Activated CD4-positive, alpha-beta T cell treated with anti-CD3 and anti-CD28 coated beads for 36 hours (primary cell): ENCODE measurements at regions of chr4 and their contacts with region 1.

Region 1: DNA sequence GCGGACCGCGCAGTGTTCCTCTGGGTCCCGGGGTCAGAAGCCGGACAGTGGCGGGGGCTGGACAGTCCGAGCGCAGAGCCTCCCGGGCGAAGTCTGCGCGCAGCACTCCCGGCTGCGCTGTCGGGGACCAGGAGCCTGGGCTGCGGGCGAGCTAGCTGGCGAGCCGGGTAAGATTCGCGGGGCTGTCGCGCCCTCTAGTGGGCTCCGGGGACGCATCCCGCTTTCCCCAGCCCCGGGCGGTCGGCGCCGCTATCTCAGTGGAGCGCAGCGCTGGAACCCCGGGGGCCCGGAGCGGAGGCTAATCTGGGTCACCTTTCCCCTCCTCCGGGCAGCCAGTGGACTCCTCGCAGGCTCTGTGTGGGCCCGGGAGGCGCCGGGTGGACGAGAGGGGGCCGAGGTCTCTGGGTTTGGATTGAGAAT is 4.2 kb downstream of the PDGFRA start:
- DNase-seq: peak; percentile 91
- ATAC-seq: peak; percentile 93
- H3K4me3 Mint-ChIP-seq: peak overlapping the region; percentile 60
- H3K27ac Mint-ChIP-seq: no peak overlapping the region
- H3K4me1 Mint-ChIP-seq: peaks cover 20% of the 10 kb centered on the region
- H3K27me3 Mint-ChIP-seq: peaks cover 48% of the 10 kb centered on the region

Region 2: DNA sequence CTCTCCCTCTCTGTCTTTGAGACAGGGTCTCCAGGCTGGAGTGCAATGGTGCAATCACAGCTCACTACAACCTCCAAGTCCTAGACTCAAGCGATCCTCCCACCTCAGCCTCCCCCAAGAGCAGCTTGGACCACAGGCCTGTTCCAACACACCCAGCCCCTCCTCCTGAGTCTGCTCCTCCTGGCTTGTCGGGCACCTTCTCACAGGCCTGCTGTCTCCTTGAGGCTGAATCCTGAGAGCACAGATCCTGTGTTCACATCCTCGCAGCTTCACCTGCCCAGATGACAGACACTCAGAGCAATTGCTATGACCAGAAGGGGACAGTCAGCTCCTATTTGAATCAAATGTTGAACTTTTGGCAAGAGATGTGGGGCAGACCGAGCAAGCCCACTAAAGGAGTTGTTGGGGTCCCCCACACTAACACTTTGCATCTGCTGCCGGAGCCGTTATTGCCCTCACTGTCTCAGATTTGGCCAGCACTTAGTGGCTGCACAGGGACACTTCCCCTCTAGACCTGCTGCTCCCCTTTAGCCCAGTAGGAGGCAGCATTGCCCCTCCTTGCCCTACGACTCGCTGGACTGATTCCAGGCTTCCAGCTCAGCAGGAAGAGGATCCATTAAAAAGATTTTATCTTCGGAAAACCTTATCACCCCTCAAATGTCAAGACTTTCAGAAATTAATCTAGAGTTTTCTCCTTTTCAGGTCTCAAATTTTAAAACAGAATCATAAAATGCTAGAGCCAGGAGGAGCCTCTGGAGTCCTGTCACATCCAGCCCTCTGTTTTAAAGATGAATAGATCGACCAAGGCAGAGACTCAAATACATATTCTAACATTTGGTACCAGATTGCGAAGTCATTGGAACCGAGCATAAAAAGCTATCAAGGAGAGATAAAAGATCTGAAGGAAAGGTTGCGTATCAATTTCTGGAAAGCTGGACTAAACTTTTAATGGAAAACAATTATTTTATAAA is 1687.9 kb before region 1 on chr4:
- CTCF ChIA-PET with region 1: interaction called, 8 read pairs
- POLR2A ChIA-PET with region 1: no interaction called
- intact Hi-C with region 1: loop called (anchors 2 to 10 kb)
- DNase-seq: peak; percentile 76
- ATAC-seq: peak; percentile 61
- H3K4me3 Mint-ChIP-seq: no peak overlapping the region
- H3K27ac Mint-ChIP-seq: no peak overlapping the region
- H3K4me1 Mint-ChIP-seq: peaks cover 2% of the 10 kb centered on the region
- H3K27me3 Mint-ChIP-seq: peaks cover 2% of the 10 kb centered on the region

Region 3: DNA sequence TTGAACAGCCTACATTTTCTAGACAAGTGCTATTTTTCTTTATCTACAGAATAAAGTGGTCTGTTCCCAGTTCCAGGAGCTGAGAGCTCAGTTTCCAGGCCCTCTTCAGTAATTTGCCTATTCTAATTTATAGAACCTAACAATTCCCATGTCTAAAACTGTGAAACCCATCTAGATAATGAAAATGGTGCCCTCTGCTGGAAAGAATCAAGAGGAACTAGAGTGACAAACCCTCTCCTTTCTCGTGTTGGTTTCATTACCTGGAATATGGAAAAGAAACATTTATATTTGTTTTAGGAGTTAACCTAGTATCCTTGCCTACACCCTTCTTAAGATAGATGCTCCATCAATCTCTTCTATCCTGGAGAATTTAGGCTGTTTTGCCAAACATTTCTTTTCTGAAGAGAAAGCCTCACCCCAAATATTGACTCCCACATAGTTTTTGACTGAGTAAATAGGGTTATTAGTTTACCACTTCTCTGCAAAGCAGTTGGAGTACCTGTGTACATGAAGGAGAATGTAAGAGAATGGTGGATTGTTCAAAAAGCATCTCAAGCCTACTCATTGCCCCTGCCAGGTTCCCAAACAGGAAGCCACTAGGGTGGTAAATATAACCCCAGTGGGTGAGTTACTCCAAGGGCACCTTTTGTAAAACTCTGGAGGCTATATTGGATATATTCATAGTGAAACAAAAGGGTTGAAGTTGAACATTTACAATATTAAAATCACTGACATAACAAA is 1249.6 kb before region 1 on chr4:
- CTCF ChIA-PET with region 1: no interaction called
- POLR2A ChIA-PET with region 1: no interaction called
- intact Hi-C with region 1: loop called in 1 of 2 experiments (anchors 2 kb)
- DNase-seq: no peak
- ATAC-seq: peak; percentile 44
- H3K4me3 Mint-ChIP-seq: no peak overlapping the region
- H3K27ac Mint-ChIP-seq: no peak overlapping the region
- H3K4me1 Mint-ChIP-seq: peaks cover 4% of the 10 kb centered on the region
- H3K27me3 Mint-ChIP-seq: no peaks in the 10 kb centered on the region

Region 4: DNA sequence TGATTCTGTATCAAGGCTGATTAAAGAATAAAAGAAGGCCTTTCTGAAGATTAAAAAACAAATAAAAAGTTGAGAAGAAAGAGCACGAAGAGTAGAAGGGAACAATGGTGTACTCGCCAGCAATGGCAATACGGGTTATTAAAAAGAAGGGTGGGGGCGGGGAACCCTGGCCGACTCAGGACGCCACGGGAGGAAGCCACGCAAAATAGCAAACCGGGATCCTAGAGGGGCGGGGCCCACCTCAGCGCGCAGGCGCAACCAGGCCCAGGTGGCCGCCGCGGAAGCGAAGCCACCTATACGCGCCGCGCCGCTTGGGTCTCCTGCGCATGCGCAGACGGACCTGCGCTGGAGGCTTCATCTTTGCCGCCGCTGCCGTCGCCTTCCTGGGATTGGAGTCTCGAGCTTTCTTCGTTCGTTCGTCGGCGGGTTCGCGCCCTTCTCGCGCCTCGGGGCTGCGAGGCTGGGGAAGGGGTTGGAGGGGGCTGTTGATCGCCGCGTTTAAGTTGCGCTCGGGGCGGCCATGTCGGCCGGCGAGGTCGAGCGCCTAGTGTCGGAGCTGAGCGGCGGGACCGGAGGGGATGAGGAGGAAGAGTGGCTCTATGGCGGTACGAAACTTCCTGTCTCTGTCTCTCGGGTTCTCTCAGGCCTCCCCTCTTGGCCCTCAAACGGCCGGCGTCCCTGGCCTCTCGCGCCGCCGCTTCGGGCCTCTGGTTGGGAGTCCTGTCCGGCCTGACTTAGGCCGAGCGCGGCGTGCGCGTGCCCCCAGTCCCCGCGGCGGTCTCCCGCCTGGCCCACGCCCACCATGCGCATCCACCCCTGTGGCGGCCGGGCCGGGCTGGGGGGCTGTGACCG is 855.7 kb before region 1 on chr4 and contains the start of gene FIP1L1:
- CTCF ChIA-PET with region 1: interaction called, 10 read pairs
- POLR2A ChIA-PET with region 1: no interaction called
- intact Hi-C with region 1: no loop called
- DNase-seq: peak; percentile 98
- ATAC-seq: peak; percentile 97
- H3K4me3 Mint-ChIP-seq: peak within 1 kb of the TSS; percentile 99
- H3K27ac Mint-ChIP-seq: peak within 1 kb of the TSS; percentile 97
- H3K4me1 Mint-ChIP-seq: peaks cover 29% of the 10 kb centered on the region
- H3K27me3 Mint-ChIP-seq: no peaks in the 10 kb centered on the region
- total RNA-seq, gene FIP1L1: 72.3 to 96.3 TPM

Region 5: GRCh38 chr4:53432528-53433424 is 800.5 kb before region 1 on chr4:
- CTCF ChIA-PET with region 1: no interaction called
- POLR2A ChIA-PET with region 1: no interaction called
- intact Hi-C with region 1: no loop called
- DNase-seq: no peak
- ATAC-seq: peak; percentile 81
- H3K4me3 Mint-ChIP-seq: no peak overlapping the region
- H3K27ac Mint-ChIP-seq: no peak overlapping the region
- H3K4me1 Mint-ChIP-seq: peaks cover 26% of the 10 kb centered on the region
- H3K27me3 Mint-ChIP-seq: no peaks in the 10 kb centered on the region

Region 6: GRCh38 chr4:53706422-53707032 is 526.8 kb before region 1 on chr4:
- CTCF ChIA-PET with region 1: interaction called, 6 read pairs
- POLR2A ChIA-PET with region 1: no interaction called
- intact Hi-C with region 1: loop called in 1 of 2 experiments (anchors 1 kb)
- DNase-seq: no peak
- ATAC-seq: no peak
- H3K4me3 Mint-ChIP-seq: no peak overlapping the region
- H3K27ac Mint-ChIP-seq: no peak overlapping the region
- H3K4me1 Mint-ChIP-seq: peaks cover 13% of the 10 kb centered on the region
- H3K27me3 Mint-ChIP-seq: peaks cover 22% of the 10 kb centered on the region

Region 7: GRCh38 chr4:53929955-53930798 is 303.1 kb before region 1 on chr4:
- CTCF ChIA-PET with region 1: interaction called, 66 read pairs
- POLR2A ChIA-PET with region 1: no interaction called
- intact Hi-C with region 1: loop called (anchors 1 to 2 kb)
- DNase-seq: peak; percentile 76
- ATAC-seq: peak; percentile 86
- H3K4me3 Mint-ChIP-seq: no peak overlapping the region
- H3K27ac Mint-ChIP-seq: no peak overlapping the region
- H3K4me1 Mint-ChIP-seq: no peaks in the 10 kb centered on the region
- H3K27me3 Mint-ChIP-seq: peaks cover 9% of the 10 kb centered on the region